ENCODE measurements at regions of chr3 and their contacts with region 1.

Region 1: GRCh38 chr3:191255156-191255555 is 56.1 kb downstream of the OSTN start:
- DNase-seq: no peak
- ATAC-seq: no peak
- H3K4me3 ChIP-seq: no peak overlapping the region
- H3K27ac ChIP-seq: no peak overlapping the region
- H3K4me1 ChIP-seq: no peaks in the 10 kb centered on the region
- H3K27me3 ChIP-seq: no peaks in the 10 kb centered on the region; a peak in 1 of 5 replicates
- CTCF ChIP-seq: no peak
- EP300 ChIP-seq: no peak
- POLR2A ChIP-seq: no peak
- RAD21 ChIP-seq: no peak

Region 2: DNA sequence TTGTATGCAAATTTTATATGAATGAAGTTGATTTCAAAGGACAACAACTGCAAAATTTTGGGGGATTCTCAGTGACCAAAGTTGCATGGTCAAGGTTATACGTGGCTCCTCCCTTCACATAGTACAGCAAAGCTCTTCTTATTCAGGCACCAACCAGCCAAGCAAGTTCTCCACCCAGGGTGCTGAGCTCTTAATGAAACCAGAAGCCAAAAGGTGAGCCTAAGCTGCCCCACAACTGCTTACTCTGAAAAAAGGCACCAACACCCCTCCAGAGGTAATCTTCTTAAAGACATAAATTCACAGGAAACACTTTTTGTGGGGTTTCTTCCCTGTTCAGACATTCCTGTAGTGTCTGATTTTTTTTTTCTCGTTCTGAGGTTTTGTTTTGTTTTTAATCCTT is 286.5 kb before region 1 on chr3:
- CTCF ChIA-PET with region 1: no interaction called
- POLR2A ChIA-PET with region 1: no interaction called
- in situ Hi-C with region 1: no loop called
- intact Hi-C with region 1: no loop called
- DNase-seq: no peak
- ATAC-seq: no peak
- H3K4me3 ChIP-seq: no peak overlapping the region
- H3K27ac ChIP-seq: no peak overlapping the region
- H3K4me1 ChIP-seq: no peaks in the 10 kb centered on the region
- H3K27me3 ChIP-seq: no peaks in the 10 kb centered on the region
- CTCF ChIP-seq: no peak
- EP300 ChIP-seq: no peak
- POLR2A ChIP-seq: no peak
- RAD21 ChIP-seq: no peak

Region 3: DNA sequence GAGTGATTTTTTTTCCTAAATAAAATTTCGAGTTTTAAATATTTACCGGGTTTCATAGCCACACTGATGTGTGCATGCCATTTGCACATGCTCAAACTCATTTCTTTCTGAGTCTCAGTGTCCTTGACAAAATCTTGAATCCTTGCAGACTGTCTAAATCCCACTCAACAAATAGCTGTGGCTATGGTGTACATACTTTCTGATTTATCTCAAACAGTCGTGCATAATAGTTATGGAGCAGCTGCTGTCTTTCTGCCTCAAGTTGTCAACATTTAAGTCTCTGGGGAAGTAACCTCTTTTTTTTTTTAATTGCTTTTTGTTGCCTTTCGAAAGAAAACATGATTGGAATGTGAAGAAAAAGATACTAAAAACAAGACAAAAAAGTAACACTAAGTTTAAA is 128.0 kb after region 1 on chr3:
- CTCF ChIA-PET with region 1: no interaction called
- POLR2A ChIA-PET with region 1: no interaction called
- in situ Hi-C with region 1: no loop called
- intact Hi-C with region 1: loop called (anchors 5 kb)
- DNase-seq: no peak
- ATAC-seq: no peak
- H3K4me3 ChIP-seq: no peak overlapping the region
- H3K27ac ChIP-seq: no peak overlapping the region
- H3K4me1 ChIP-seq: 0 out of 5 replicates have a peak, but pooled peaks cover 0 to 2% of the 10 kb centered on the region in 2 experiments
- H3K27me3 ChIP-seq: no peaks in the 10 kb centered on the region
- CTCF ChIP-seq: no peak
- EP300 ChIP-seq: no peak
- POLR2A ChIP-seq: no peak
- RAD21 ChIP-seq: no peak